Activated CD4-positive, alpha-beta T cell treated with anti-CD3 and anti-CD28 coated beads, Interleukin-2, amount 10 ng/mL, durations not matched to agents 24 days and 14 days (primary cell): ENCODE measurements at regions of chr7 and their contacts with region 1.

Region 1: GRCh38 chr7:27784393-27785053 is 44.6 kb downstream of the TAX1BP1 start:
- DNase-seq: peak; percentile 71
- H3K4me3 Mint-ChIP-seq: no peak overlapping the region
- H3K27ac Mint-ChIP-seq: no peak overlapping the region
- H3K4me1 Mint-ChIP-seq: peaks cover 7% of the 10 kb centered on the region
- H3K27me3 Mint-ChIP-seq: no peaks in the 10 kb centered on the region

Region 2: GRCh38 chr7:27053153-27053552 is 731.4 kb before region 1 on chr7:
- intact Hi-C with region 1: no loop called
- DNase-seq: no peak
- H3K4me3 Mint-ChIP-seq: no peak overlapping the region
- H3K27ac Mint-ChIP-seq: no peak overlapping the region
- H3K4me1 Mint-ChIP-seq: no peaks in the 10 kb centered on the region
- H3K27me3 Mint-ChIP-seq: peaks cover 2% of the 10 kb centered on the region

Region 3: GRCh38 chr7:27739909-27740448 is 44.5 kb before region 1 on chr7 and contains the start of gene TAX1BP1:
- intact Hi-C with region 1: loop called (anchors 2 kb)
- DNase-seq: peak; percentile 99
- H3K4me3 Mint-ChIP-seq: peak within 1 kb of the TSS; percentile 94
- H3K27ac Mint-ChIP-seq: peak within 1 kb of the TSS; percentile 97
- H3K4me1 Mint-ChIP-seq: peaks cover 27% of the 10 kb centered on the region
- H3K27me3 Mint-ChIP-seq: peaks cover 11% of the 10 kb centered on the region
- total RNA-seq, gene TAX1BP1: 80.3 and 91.5 TPM in 2 replicates

Region 4: GRCh38 chr7:27890205-27890849 is 105.8 kb after region 1 on chr7:
- intact Hi-C with region 1: loop called (anchors 10 kb)
- DNase-seq: no peak
- H3K4me3 Mint-ChIP-seq: no peak overlapping the region
- H3K27ac Mint-ChIP-seq: no peak overlapping the region
- H3K4me1 Mint-ChIP-seq: peaks cover 2% of the 10 kb centered on the region
- H3K27me3 Mint-ChIP-seq: peaks cover 5% of the 10 kb centered on the region